ENCODE measurements at regions of chr22 and their contacts with region 1.

Region 1: GRCh38 chr22:22587577-22588188 is 28.6 kb upstream of the PRAME start:
- DNase-seq: no peak
- H3K4me3 ChIP-seq: no peak overlapping the region
- H3K4me3 Mint-ChIP-seq: no peak overlapping the region
- H3K27ac ChIP-seq: no peak overlapping the region
- H3K27ac Mint-ChIP-seq: no peak overlapping the region
- H3K4me1 ChIP-seq: no peaks in the 10 kb centered on the region
- H3K4me1 Mint-ChIP-seq: no peaks in the 10 kb centered on the region
- H3K27me3 ChIP-seq: peaks cover 0 to under 1% of the 10 kb centered on the region in 2 donors
- H3K27me3 Mint-ChIP-seq: peaks cover 6 to 16% (median 8%) of the 10 kb centered on the region in 3 donors
- CTCF ChIP-seq: no peak

Region 2: DNA sequence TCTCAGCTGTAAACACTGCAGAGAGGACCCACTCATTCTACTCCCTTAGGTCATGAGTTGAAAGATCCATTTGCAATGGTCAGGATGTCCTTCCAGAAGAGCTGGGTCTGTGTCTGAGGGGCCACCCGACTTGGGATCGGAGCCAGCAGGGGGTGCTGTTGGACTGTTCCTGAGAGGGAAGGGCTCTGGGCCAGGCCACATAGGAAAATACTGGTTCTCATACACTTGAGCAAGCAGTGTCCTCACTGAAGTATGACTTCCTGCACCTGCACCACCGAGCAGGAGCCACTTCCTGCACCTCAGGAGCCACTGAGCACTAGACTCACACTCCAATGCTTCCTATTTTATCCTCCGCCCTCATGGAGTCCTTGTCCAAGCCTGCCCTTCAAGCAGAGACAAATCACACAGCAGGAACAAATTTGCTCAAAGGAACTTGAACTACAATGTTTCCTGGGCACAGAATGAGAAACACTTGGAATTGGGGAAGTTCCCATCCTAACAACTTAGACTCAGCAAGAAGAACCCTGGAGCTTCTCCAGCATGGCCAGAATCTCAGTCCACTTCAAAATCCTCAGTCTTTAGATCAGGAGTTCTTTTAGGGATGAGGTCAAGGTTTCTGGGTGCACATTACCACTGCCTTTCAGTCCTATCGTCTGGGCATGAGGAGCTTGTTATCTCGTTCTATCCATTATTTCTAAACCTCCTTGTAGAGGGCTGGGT is 379.7 kb before region 1 on chr22:
- intact Hi-C with region 1: no loop called
- DNase-seq: peak; percentile 36 to 49 (median 46)
- H3K4me3 ChIP-seq: no peak overlapping the region
- H3K4me3 Mint-ChIP-seq: no peak overlapping the region
- H3K27ac ChIP-seq: no peak overlapping the region
- H3K27ac Mint-ChIP-seq: peak overlapping the region in 1 of 7 donors; percentile 15
- H3K4me1 ChIP-seq: no peaks in the 10 kb centered on the region
- H3K4me1 Mint-ChIP-seq: peaks cover 5% of the 10 kb centered on the region
- H3K27me3 ChIP-seq: peaks cover 10 to 21% of the 10 kb centered on the region in 2 donors
- H3K27me3 Mint-ChIP-seq: peaks cover 20 to 47% (median 32%) of the 10 kb centered on the region in 3 donors
- CTCF ChIP-seq: peak; percentile 73

Region 3: GRCh38 chr22:22463855-22464540 is 123.7 kb before region 1 on chr22:
- intact Hi-C with region 1: loop called in 1 of 2 experiments (anchors 10 kb)
- DNase-seq: peak; percentile 39 to 64 (median 54)
- H3K4me3 ChIP-seq: no peak overlapping the region
- H3K4me3 Mint-ChIP-seq: peak overlapping the region in 1 of 2 donors; percentile 35
- H3K27ac ChIP-seq: no peak overlapping the region
- H3K27ac Mint-ChIP-seq: peak overlapping the region in 1 of 7 donors; percentile 51
- H3K4me1 ChIP-seq: no peaks in the 10 kb centered on the region
- H3K4me1 Mint-ChIP-seq: peaks cover 2% of the 10 kb centered on the region
- H3K27me3 ChIP-seq: peaks cover 3 to 9% of the 10 kb centered on the region in 2 donors
- H3K27me3 Mint-ChIP-seq: peaks cover 3 to 35% (median 10%) of the 10 kb centered on the region in 3 donors
- CTCF ChIP-seq: peak; percentile 88

Measured in CD14-positive monocyte (primary cell).